ENCODE measurements at regions of chr2 and their contacts with region 1.

Region 1: DNA sequence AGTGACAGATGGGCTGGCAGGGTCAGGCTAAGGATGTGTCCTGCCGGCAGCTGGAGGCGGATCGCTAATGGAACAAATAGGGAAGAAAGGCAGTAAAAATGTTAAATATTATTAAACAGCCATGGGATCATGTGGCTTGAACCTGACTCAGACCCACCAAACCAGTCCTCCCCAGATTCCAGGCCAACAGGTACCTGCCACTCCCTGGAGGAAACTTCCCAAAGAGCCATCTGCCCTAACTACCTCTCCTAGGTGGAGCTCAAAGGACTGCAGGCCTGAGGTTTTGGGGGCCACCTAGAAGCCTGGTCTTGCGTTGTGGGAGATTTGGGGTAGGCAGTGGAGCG is 34.3 kb downstream of the CIB4 start:
- DNase-seq: no peak
- ATAC-seq: peak; percentile 74
- H3K4me3 ChIP-seq: no peak overlapping the region
- H3K4me1 ChIP-seq: no peaks in the 10 kb centered on the region
- CTCF ChIP-seq: no peak

Region 2: DNA sequence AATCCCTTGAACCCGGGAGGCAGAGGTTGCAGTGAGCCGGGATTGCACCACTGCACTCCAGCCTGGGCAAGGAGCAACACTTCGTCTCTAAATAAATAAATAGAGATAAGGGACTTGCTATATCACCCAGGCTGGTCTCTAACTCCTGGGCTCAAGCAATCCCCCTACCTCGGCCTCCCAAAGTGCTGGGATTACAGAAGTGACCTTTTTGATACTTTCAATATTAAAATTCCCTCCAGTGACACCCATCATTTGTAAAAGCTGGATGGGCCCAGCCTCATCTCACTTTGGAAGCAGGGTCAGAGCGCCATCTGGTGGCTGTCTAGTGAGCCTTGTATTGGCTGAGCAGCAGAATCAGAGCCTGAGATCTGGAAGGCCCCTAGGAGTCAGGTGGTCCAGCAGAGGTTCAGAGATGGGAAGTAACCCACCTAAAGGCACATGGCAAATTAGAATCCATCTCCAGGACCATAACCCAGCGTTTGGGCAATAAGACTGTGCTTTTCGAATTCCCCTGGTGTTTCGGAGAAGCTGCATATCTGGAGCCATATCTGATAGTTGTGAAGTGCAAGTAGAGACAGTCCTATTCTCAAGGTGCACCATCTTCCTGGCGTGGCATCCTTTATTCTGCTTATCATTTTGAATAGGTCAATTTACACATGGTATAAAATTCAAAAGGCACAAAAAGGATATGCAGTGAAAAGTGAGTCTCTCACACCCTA is 138.9 kb after region 1 on chr2:
- intact Hi-C with region 1: loop called (anchors 2 kb)
- DNase-seq: peak in 2 of 3 donors; percentile 86 to 91
- ATAC-seq: peak; percentile 85
- H3K4me3 ChIP-seq: no peak overlapping the region
- H3K4me1 ChIP-seq: no peaks in the 10 kb centered on the region
- CTCF ChIP-seq: peak; percentile 86

Measured in mucosa of descending colon (tissue), 3 donors.